BJ (cell line): ENCODE measurements at regions of chr11 and their contacts with region 1.

Region 1: GRCh38 chr11:6251120-6251733 is 8.4 kb upstream of the CCKBR start:
- DNase-seq: peak; percentile 18
- H3K4me3 ChIP-seq: no peak overlapping the region
- H3K27me3 ChIP-seq: peaks cover under 1% of the 10 kb centered on the region
- CTCF ChIP-seq: peak; percentile 96

Region 2: DNA sequence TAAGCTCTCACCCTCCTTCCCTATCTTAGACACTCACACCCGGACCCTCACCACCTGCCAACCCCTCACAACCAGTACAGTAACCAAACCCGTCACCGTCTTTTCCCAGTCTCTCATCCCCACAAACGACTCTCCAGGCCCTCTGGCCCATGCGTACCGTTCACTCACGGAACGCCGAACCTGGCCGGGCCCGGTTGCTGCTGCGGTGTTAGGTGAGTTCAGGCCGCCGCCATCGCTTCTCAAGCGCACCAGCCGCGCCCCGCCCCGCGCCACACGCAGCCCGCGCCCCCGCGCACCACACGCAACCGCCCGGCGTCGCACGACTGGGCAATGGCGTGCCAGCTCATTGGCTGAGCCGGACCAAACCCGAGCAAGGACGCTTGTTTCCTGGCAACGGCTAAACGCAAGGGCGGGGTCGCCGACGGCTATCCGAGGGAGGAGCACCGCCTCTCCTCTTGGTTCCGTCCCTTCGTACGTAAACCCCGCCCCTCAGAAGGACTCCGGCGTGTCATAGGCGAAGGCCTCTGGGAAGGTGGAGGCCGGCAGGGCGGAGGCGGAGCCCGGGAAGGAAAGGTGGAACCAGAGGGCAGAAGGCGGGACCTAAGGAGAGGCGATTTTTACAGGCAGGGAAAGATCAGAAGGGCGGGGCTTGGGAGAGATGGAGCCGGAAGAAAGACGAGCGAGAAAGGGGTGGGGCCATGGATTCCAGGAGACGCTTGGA is 16.7 kb before region 1 on chr11 and contains the start of gene FHIP1B:
- CTCF ChIA-PET with region 1: interaction called, 47 read pairs
- POLR2A ChIA-PET with region 1: no interaction called
- DNase-seq: peak; percentile 99
- H3K4me3 ChIP-seq: peak within 1 kb of the TSS; percentile 97
- H3K27me3 ChIP-seq: 0 out of 2 replicates have a peak, but pooled peaks cover 2% of the 10 kb centered on the region
- CTCF ChIP-seq: no peak
- polyA plus RNA-seq, gene FHIP1B: 22.1 and 30.6 TPM in 2 replicates

Region 3: GRCh38 chr11:6269994-6270393 is 18.8 kb after region 1 on chr11:
- CTCF ChIA-PET with region 1: interaction called, 14 read pairs
- POLR2A ChIA-PET with region 1: no interaction called
- DNase-seq: no peak
- H3K4me3 ChIP-seq: no peak overlapping the region
- H3K27me3 ChIP-seq: peaks cover 1% of the 10 kb centered on the region; the same call in 1 of the 2 replicates
- CTCF ChIP-seq: no peak

Region 4: DNA sequence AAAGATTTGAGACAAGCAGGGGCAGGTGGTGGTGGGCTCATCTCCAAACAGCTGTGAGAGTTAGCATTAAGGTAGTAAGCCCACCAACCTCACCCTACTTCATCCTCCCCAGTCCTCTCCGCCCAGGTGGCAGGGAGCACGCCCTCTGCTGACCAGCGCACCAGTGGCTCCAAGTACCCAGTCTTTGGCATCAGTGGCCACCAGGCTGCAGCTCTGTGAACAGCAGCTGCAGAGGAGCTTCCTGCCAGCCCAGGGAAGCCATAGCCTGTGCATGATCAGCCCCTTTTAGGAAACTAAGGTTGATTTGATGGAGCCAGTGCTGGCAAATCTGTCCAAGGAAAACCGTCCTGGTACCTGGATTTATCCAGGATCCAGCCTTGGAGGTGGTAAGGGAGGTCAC is 47.4 kb after region 1 on chr11:
- CTCF ChIA-PET with region 1: interaction called, 16 read pairs
- POLR2A ChIA-PET with region 1: no interaction called
- DNase-seq: no peak
- H3K4me3 ChIP-seq: no peak overlapping the region
- H3K27me3 ChIP-seq: 0 out of 2 replicates have a peak, but pooled peaks cover under 1% of the 10 kb centered on the region
- CTCF ChIP-seq: peak; percentile 76

Region 5: GRCh38 chr11:6362873-6363678 is 111.8 kb after region 1 on chr11:
- CTCF ChIA-PET with region 1: interaction called, 98 read pairs
- POLR2A ChIA-PET with region 1: interaction called, 3 read pairs
- DNase-seq: no peak
- H3K4me3 ChIP-seq: no peak overlapping the region
- H3K27me3 ChIP-seq: peaks cover 2% of the 10 kb centered on the region; the same call in 1 of the 2 replicates
- CTCF ChIP-seq: peak; percentile 98